Caco-2 (cell line): ENCODE measurements at regions of chr15 and their contacts with region 1.

Region 1: GRCh38 chr15:40290918-40291574 is 8.2 kb upstream of the ANKRD63 start:
- DNase-seq: peak; percentile 74
- H3K4me3 ChIP-seq: peak overlapping the region; percentile 54
- H3K4me3 Mint-ChIP-seq: peak overlapping the region; percentile 76
- H3K27ac Mint-ChIP-seq: no peak overlapping the region
- H3K4me1 ChIP-seq: no peaks in the 10 kb centered on the region
- H3K4me1 Mint-ChIP-seq: no peaks in the 10 kb centered on the region
- H3K27me3 ChIP-seq: no peaks in the 10 kb centered on the region
- H3K27me3 Mint-ChIP-seq: no peaks in the 10 kb centered on the region
- CTCF ChIP-seq: no peak

Region 2: DNA sequence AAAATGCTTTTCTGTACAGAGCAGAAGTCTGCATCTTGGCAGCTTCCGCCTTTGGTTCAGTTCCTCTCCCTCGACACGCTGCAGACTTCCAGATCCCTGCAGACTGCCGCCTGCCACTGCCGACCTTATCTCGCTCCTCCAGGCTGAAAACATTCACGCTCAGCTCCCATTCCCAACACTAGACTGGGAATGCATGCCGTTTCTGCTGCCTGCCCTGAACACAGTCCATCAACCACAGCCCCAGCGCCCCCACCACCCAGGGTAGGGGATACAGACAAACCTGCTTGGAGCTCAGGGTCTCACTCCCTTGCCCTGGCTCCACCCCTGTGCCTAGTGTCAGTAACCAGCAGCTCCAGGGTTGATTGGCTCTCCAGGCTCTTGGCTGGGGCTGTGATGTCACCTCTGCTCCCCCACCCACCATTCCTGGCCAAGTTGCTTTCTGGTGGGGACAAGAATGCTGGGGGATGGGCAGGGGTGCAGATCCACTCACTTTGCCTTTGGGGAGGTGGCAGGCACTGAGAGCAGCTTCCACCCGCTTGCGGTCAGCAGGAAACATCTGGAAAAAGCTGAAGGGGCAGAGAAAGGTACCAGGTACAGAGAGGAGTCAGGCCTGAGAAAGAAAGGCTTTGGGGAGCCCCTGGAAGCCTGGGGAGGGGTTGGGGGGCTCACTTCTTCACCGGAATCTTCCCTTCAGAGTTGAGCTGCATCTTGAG is 10.6 kb after region 1 on chr15:
- CTCF ChIA-PET with region 1: interaction called, 11 read pairs
- POLR2A ChIA-PET with region 1: no interaction called
- intact Hi-C with region 1: no loop called
- DNase-seq: no peak
- H3K4me3 ChIP-seq: no peak overlapping the region
- H3K4me3 Mint-ChIP-seq: no peak overlapping the region
- H3K27ac Mint-ChIP-seq: no peak overlapping the region
- H3K4me1 ChIP-seq: peaks cover 4% of the 10 kb centered on the region
- H3K4me1 Mint-ChIP-seq: peaks cover 5% of the 10 kb centered on the region
- H3K27me3 ChIP-seq: no peaks in the 10 kb centered on the region
- H3K27me3 Mint-ChIP-seq: no peaks in the 10 kb centered on the region
- CTCF ChIP-seq: no peak

Region 3: GRCh38 chr15:40598126-40598525 is 307.1 kb after region 1 on chr15:
- CTCF ChIA-PET with region 1: no interaction called
- POLR2A ChIA-PET with region 1: no interaction called
- intact Hi-C with region 1: no loop called
- DNase-seq: no peak
- H3K4me3 ChIP-seq: no peak overlapping the region
- H3K4me3 Mint-ChIP-seq: no peak overlapping the region
- H3K27ac Mint-ChIP-seq: no peak overlapping the region
- H3K4me1 ChIP-seq: no peaks in the 10 kb centered on the region
- H3K4me1 Mint-ChIP-seq: peaks cover 7% of the 10 kb centered on the region
- H3K27me3 ChIP-seq: no peaks in the 10 kb centered on the region
- H3K27me3 Mint-ChIP-seq: no peaks in the 10 kb centered on the region
- CTCF ChIP-seq: no peak